Endothelial cell of umbilical vein (primary cell): ENCODE measurements at regions of chr1 and their contacts with region 1.

Region 1: GRCh38 chr1:101520302-101520701 is 283.5 kb downstream of the S1PR1 start:
- DNase-seq: peak; percentile 57
- H3K4me3 ChIP-seq: no peak overlapping the region
- H3K27ac ChIP-seq: no peak overlapping the region
- H3K4me1 ChIP-seq: no peaks in the 10 kb centered on the region
- H3K27me3 ChIP-seq: peaks cover 2 to 3% of the 10 kb centered on the region in 2 experiments
- CTCF ChIP-seq: peak; percentile 62 to 71
- POLR2A ChIP-seq: no peak

Region 2: DNA sequence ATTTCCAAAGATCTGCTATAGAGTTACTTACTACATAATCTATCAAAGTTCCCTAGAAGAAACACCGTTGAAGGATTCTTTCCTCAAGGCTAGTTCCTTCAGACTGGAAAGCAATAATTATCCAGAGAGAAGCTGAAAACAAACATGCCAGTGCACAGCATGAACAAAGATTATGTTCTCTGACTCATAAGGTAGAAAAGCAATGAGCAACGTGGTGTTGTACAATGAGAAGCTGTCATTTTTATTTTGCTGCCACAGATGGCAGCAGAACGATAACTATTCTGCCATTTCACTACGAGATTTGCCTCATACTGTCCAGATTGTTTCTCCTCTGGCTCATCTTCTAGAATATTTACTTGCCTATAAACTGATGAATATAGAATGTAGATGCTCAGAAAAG is 636.3 kb before region 1 on chr1:
- CTCF ChIA-PET with region 1: no interaction called
- POLR2A ChIA-PET with region 1: no interaction called
- dilution Hi-C with region 1: no loop called
- intact Hi-C with region 1: no loop called
- DNase-seq: peak; percentile 76
- H3K4me3 ChIP-seq: no peak overlapping the region
- H3K27ac ChIP-seq: no peak overlapping the region
- H3K4me1 ChIP-seq: peaks cover 14% of the 10 kb centered on the region
- H3K27me3 ChIP-seq: no peaks in the 10 kb centered on the region
- CTCF ChIP-seq: peak in 1 of 2 donors; percentile 5
- POLR2A ChIP-seq: no peak

Region 3: GRCh38 chr1:101388904-101389546 is 131.3 kb before region 1 on chr1:
- CTCF ChIA-PET with region 1: no interaction called
- POLR2A ChIA-PET with region 1: no interaction called
- dilution Hi-C with region 1: no loop called
- intact Hi-C with region 1: no loop called
- DNase-seq: no peak
- H3K4me3 ChIP-seq: no peak overlapping the region
- H3K27ac ChIP-seq: no peak overlapping the region
- H3K4me1 ChIP-seq: no peaks in the 10 kb centered on the region
- H3K27me3 ChIP-seq: no peaks in the 10 kb centered on the region
- CTCF ChIP-seq: no peak
- POLR2A ChIP-seq: no peak

Region 4: DNA sequence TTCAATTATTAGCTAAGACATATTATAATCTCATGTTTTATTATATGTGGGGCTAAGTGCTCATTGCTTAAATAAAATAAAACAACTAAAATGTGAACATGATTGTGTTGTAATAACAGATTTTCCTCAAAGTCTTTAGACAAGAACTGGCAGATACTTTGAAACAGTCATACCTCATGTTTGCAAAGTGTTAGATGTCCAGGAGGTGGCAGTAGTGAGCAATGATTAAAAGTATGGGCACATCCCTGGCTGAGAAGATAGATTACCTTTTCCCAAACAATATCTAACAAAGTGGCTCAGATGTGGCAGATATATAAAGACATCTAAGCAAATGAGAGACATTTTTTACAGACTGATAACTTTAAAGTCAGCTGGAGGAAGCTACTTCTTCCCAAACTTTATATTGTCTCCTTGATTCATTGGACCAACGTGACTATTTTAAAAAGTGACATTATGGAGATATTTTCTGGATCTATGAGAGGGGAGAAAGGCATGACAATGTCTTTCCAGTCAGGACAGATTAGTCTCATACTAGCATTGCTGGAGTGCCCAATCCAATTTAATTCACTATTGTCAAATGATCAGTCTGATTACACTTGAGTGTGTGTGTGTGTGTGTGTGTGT is 13.6 kb before region 1 on chr1:
- CTCF ChIA-PET with region 1: interaction called, 18 read pairs
- POLR2A ChIA-PET with region 1: no interaction called
- dilution Hi-C with region 1: no loop called
- intact Hi-C with region 1: no loop called
- DNase-seq: peak; percentile 47
- H3K4me3 ChIP-seq: no peak overlapping the region
- H3K27ac ChIP-seq: no peak overlapping the region
- H3K4me1 ChIP-seq: no peaks in the 10 kb centered on the region
- H3K27me3 ChIP-seq: peaks cover 3 to 12% of the 10 kb centered on the region in 2 experiments
- CTCF ChIP-seq: peak; percentile 54 to 56
- POLR2A ChIP-seq: no peak

Region 5: GRCh38 chr1:101567582-101568189 is 47.4 kb after region 1 on chr1:
- CTCF ChIA-PET with region 1: interaction called, 21 read pairs
- POLR2A ChIA-PET with region 1: no interaction called
- dilution Hi-C with region 1: no loop called
- intact Hi-C with region 1: loop called (anchors 1 kb)
- DNase-seq: peak; percentile 42
- H3K4me3 ChIP-seq: no peak overlapping the region
- H3K27ac ChIP-seq: no peak overlapping the region
- H3K4me1 ChIP-seq: peaks cover 2% of the 10 kb centered on the region
- H3K27me3 ChIP-seq: peaks cover 0 to 7% of the 10 kb centered on the region in 2 experiments
- CTCF ChIP-seq: peak; percentile 91 to 94
- POLR2A ChIP-seq: no peak

Region 6: DNA sequence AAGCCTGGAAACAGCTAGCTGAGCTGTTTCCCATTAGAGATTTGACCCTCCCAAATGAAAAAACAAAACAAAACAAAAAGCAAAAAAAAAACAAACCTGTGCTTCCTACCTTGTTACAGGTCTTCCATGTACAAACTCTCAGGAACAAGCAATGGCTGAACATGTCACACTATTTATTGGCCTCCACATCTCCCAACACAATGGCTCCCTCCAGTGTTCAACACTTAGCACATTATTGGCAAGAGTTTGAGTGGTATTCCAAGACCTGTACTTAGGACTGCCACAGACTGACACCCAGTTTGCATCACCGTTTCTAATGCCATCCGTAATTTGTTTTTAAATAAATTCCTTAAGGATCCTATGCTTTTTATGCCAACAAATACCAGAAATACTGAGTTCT is 671.4 kb after region 1 on chr1:
- CTCF ChIA-PET with region 1: no interaction called
- POLR2A ChIA-PET with region 1: no interaction called
- dilution Hi-C with region 1: no loop called
- intact Hi-C with region 1: loop called (anchors 2 kb)
- DNase-seq: peak; percentile 43
- H3K4me3 ChIP-seq: no peak overlapping the region
- H3K27ac ChIP-seq: no peak overlapping the region
- H3K4me1 ChIP-seq: no peaks in the 10 kb centered on the region
- H3K27me3 ChIP-seq: no peaks in the 10 kb centered on the region
- CTCF ChIP-seq: peak; percentile 15 to 25
- POLR2A ChIP-seq: no peak

Region 7: GRCh38 chr1:102234753-102235359 is 714.6 kb after region 1 on chr1:
- CTCF ChIA-PET with region 1: no interaction called
- POLR2A ChIA-PET with region 1: no interaction called
- dilution Hi-C with region 1: no loop called
- intact Hi-C with region 1: no loop called
- DNase-seq: no peak
- H3K4me3 ChIP-seq: no peak overlapping the region
- H3K27ac ChIP-seq: no peak overlapping the region
- H3K4me1 ChIP-seq: no peaks in the 10 kb centered on the region
- H3K27me3 ChIP-seq: no peaks in the 10 kb centered on the region
- CTCF ChIP-seq: no peak
- POLR2A ChIP-seq: no peak

Region 8: GRCh38 chr1:102970498-102971078 is 1450.3 kb after region 1 on chr1:
- CTCF ChIA-PET with region 1: interaction called, 29 read pairs
- POLR2A ChIA-PET with region 1: no interaction called
- dilution Hi-C with region 1: no loop called
- intact Hi-C with region 1: loop called (anchors 1 kb)
- DNase-seq: peak; percentile 42
- H3K4me3 ChIP-seq: no peak overlapping the region
- H3K27ac ChIP-seq: no peak overlapping the region
- H3K4me1 ChIP-seq: no peaks in the 10 kb centered on the region
- H3K27me3 ChIP-seq: no peaks in the 10 kb centered on the region
- CTCF ChIP-seq: peak; percentile 57 to 61
- POLR2A ChIP-seq: no peak

Region 9: GRCh38 chr1:103514920-103515503 is 1994.7 kb after region 1 on chr1:
- CTCF ChIA-PET with region 1: interaction called, 19 read pairs
- POLR2A ChIA-PET with region 1: no interaction called
- dilution Hi-C with region 1: no loop called
- intact Hi-C with region 1: loop called (anchors 5 kb)
- DNase-seq: peak; percentile 66
- H3K4me3 ChIP-seq: no peak overlapping the region
- H3K27ac ChIP-seq: no peak overlapping the region
- H3K4me1 ChIP-seq: peaks cover 11% of the 10 kb centered on the region
- H3K27me3 ChIP-seq: no peaks in the 10 kb centered on the region
- CTCF ChIP-seq: peak; percentile 37 to 45
- POLR2A ChIP-seq: no peak